PC-3 (cell line): ENCODE measurements at regions of chr11 and their contacts with region 1.

Region 1: GRCh38 chr11:73760679-73761402 is at the start of gene RAB6A:
- DNase-seq: peak; percentile 100
- ATAC-seq: peak; percentile 88
- H3K4me3 ChIP-seq: peak within 1 kb of the TSS; percentile 91
- H3K27ac ChIP-seq: peak within 1 kb of the TSS; percentile 43
- H3K4me1 ChIP-seq: peaks cover 12% of the 10 kb centered on the region
- H3K27me3 ChIP-seq: no peaks in the 10 kb centered on the region
- CTCF ChIP-seq: no peak
- total RNA-seq, gene RAB6A: 97.9 and 109 TPM in 2 replicates

Region 2: GRCh38 chr11:73779084-73779902 is 18.5 kb after region 1 on chr11:
- CTCF ChIA-PET with region 1: interaction called, 5 read pairs
- POLR2A ChIA-PET with region 1: interaction called, 20 read pairs
- intact Hi-C with region 1: loop called (anchors 1 kb)
- DNase-seq: peak; percentile 99
- ATAC-seq: peak; percentile 98
- H3K4me3 ChIP-seq: peak overlapping the region; percentile 72
- H3K27ac ChIP-seq: peak overlapping the region; percentile 91
- H3K4me1 ChIP-seq: peaks cover 5% of the 10 kb centered on the region; the same call in 1 of the 2 replicates
- H3K27me3 ChIP-seq: no peaks in the 10 kb centered on the region
- CTCF ChIP-seq: no peak

Region 3: DNA sequence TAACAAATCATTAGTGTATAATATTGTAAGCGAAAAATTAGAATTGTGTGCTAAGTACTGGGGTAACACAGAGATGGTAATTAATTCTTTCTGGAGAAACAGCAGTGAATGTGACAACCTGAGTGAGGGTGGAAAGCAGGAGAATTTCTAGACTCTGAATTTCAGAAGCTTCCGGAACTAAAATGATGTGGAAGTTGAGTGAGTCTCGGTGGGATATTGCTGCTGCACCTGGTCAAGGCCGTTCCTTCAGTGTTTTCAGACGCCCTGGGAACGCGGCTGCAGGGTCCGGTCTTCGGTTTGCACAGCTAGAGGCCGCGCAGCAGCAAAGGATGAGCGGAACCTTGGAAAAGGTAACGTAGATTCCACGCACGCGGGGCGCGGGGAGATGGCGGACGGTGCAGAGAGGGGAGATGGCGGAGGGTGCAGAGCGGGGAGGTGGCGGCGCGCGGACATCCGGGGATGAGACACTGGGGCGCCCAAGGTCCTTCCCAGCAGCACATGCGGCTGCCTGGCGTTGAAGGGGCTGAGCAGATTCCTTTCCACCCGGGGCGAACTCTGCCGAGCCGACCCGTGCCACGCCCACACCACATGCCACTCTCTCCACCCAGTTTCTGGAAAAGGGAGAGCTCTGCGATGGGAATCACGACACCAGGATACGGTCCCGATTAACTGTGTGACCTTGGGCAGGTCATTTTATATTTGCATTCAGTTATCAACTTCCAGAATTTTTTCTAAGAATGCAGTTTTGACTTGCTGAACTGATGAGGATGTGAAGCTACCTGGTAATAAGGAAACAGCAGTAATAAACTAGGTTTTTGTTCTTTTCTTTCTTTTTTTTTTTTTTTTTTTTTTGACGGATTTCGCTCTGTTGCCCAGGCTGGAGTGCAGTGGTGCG is 27.0 kb after region 1 on chr11 and contains the start of gene MRPL48:
- CTCF ChIA-PET with region 1: no interaction called
- POLR2A ChIA-PET with region 1: interaction called, 4 read pairs
- intact Hi-C with region 1: loop called (anchors 1 kb)
- DNase-seq: peak; percentile 98
- ATAC-seq: peak; percentile 98
- H3K4me3 ChIP-seq: peak within 1 kb of the TSS; percentile 85
- H3K27ac ChIP-seq: peak within 1 kb of the TSS; percentile 95
- H3K4me1 ChIP-seq: peaks cover 21% of the 10 kb centered on the region
- H3K27me3 ChIP-seq: no peaks in the 10 kb centered on the region
- CTCF ChIP-seq: no peak
- total RNA-seq, gene MRPL48: 48.0 and 80.8 TPM in 2 replicates

Region 4: GRCh38 chr11:73866586-73866996 is 105.8 kb after region 1 on chr11:
- CTCF ChIA-PET with region 1: no interaction called
- POLR2A ChIA-PET with region 1: interaction called, 15 read pairs
- intact Hi-C with region 1: no loop called
- DNase-seq: peak; percentile 76
- ATAC-seq: peak; percentile 69
- H3K4me3 ChIP-seq: no peak overlapping the region
- H3K27ac ChIP-seq: 0 out of 2 replicates have a peak overlapping the region, but pooled peaks have one; percentile 1
- H3K4me1 ChIP-seq: peaks cover 27% of the 10 kb centered on the region
- H3K27me3 ChIP-seq: no peaks in the 10 kb centered on the region
- CTCF ChIP-seq: no peak

Region 5: GRCh38 chr11:73931039-73931645 is 170.3 kb after region 1 on chr11:
- CTCF ChIA-PET with region 1: interaction called, 3 read pairs
- POLR2A ChIA-PET with region 1: no interaction called
- intact Hi-C with region 1: loop called (anchors 10 kb)
- DNase-seq: peak; percentile 85
- ATAC-seq: peak; percentile 75
- H3K4me3 ChIP-seq: no peak overlapping the region
- H3K27ac ChIP-seq: peak overlapping the region; percentile 40
- H3K4me1 ChIP-seq: peaks cover 20% of the 10 kb centered on the region
- H3K27me3 ChIP-seq: no peaks in the 10 kb centered on the region
- CTCF ChIP-seq: peak; percentile 76